Calu3 (cell line): ENCODE measurements at regions of chr5 and their contacts with region 1.

Region 1: DNA sequence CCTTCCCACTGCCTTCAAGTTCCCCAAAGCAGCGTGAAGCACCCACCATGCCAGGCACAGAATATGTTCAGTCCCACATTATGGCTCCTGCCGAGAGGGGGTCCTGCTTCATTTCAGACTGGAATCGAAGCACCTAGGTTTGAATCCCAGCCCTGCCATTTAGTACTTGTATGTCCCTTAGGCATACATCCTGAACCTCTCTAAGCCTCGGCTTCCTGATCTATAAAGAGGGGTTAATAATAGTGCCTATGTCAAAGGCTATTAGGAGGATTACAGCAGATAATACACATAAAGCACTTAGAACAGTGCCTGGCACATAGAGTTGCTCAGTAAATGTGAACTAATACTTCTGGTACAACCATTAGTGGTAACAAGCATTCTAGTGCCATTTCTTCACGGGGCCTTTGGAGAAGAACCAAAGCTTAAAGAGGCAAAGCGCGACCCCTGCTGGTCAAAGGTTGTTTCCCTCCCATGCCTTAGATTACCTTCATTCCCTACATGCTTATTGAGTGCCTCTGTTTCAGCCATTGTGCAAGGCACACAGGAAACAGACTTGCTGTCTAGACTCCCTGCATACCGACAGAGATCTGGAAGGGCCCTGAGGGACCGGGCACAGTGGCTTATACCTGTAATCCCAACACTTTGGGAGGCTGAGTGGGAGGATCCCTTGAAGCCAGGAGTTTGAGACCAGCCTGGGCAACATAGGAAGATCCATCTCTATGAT is 98.2 kb downstream of the PPARGC1B start:
- DNase-seq: peak; percentile 92
- H3K4me3 Mint-ChIP-seq: no peak overlapping the region
- H3K27ac Mint-ChIP-seq: peak overlapping the region; percentile 47
- H3K4me1 Mint-ChIP-seq: peaks cover 7% of the 10 kb centered on the region
- H3K27me3 Mint-ChIP-seq: no peaks in the 10 kb centered on the region
- CTCF ChIP-seq: peak; percentile 77

Region 2: DNA sequence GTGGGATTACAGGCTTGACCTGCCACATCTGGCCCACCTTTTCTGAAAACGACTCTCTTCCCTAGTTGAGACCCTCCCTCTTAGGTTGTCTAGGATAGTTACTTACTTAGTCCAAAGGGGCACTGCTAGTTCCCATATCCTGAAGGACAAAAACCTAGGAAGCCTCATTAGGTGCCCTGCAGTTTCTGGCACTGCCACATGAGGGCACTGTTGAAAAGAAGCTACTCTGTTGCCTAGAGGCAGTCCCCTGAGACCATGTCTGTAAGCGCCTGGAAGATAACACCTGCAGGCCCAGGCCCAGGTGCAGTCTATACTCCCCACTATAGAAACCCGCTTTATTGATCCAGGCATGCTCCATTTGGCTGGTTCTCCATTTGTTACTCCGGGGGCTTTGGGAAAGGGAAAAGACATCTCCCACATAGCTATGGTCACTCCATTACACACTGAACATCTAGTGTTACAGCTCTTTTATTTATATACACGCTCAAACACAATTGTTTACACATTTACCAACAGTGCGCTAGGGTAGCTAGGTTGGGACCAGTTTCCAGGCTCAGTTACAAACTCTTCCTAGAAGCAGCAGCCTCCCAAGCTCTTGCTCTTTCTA is 171.6 kb before region 1 on chr5:
- CTCF ChIA-PET with region 1: interaction called, 11 read pairs
- intact Hi-C with region 1: loop called (anchors 1 kb)
- DNase-seq: peak; percentile 71
- H3K4me3 Mint-ChIP-seq: no peak overlapping the region
- H3K27ac Mint-ChIP-seq: no peak overlapping the region
- H3K4me1 Mint-ChIP-seq: no peaks in the 10 kb centered on the region
- H3K27me3 Mint-ChIP-seq: peaks cover 39% of the 10 kb centered on the region
- CTCF ChIP-seq: peak; percentile 89

Region 3: DNA sequence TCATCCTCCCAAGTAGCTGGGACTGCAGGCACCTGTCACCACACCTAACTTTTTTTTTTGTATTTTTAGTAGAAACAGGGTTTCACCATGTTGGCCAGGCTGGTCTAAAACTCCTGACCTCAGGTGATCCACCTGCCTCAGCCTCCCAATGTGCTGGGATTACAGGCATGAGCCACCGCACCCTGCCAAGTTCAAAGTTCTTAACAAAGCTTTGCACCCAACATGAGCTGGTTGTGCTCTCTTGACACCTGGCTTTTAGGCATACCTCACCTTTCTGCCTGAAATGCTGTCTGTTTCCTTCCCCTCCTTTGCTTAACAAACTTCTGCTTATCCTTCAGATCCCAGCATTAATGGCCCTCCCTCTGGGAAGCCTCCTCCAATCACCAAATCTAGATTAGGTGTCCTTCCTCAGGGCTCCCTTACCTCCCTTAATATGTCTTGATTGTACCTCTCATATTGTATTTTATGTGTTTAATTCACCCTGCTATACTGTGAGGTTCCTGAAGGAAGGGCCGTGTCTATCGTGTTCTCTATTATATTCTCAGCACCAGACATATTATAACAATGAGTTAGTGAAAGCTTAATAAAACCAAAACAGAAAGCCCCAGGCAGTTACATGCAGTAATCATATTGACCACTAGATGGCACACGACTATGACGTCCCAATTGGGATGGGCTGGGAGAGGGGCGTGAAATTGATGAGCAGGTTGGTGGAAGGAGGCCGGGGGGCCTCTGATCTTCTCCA is 161.1 kb before region 1 on chr5:
- CTCF ChIA-PET with region 1: interaction called, 13 read pairs
- intact Hi-C with region 1: no loop called
- DNase-seq: peak; percentile 49
- H3K4me3 Mint-ChIP-seq: no peak overlapping the region
- H3K27ac Mint-ChIP-seq: no peak overlapping the region
- H3K4me1 Mint-ChIP-seq: peaks cover 8% of the 10 kb centered on the region
- H3K27me3 Mint-ChIP-seq: no peaks in the 10 kb centered on the region
- CTCF ChIP-seq: peak; percentile 84

Region 4: GRCh38 chr5:149680810-149681221 is 147.5 kb before region 1 on chr5:
- CTCF ChIA-PET with region 1: no interaction called
- intact Hi-C with region 1: no loop called
- DNase-seq: no peak
- H3K4me3 Mint-ChIP-seq: no peak overlapping the region
- H3K27ac Mint-ChIP-seq: no peak overlapping the region
- H3K4me1 Mint-ChIP-seq: peaks cover 8% of the 10 kb centered on the region
- H3K27me3 Mint-ChIP-seq: peaks cover 62% of the 10 kb centered on the region
- CTCF ChIP-seq: no peak

Region 5: DNA sequence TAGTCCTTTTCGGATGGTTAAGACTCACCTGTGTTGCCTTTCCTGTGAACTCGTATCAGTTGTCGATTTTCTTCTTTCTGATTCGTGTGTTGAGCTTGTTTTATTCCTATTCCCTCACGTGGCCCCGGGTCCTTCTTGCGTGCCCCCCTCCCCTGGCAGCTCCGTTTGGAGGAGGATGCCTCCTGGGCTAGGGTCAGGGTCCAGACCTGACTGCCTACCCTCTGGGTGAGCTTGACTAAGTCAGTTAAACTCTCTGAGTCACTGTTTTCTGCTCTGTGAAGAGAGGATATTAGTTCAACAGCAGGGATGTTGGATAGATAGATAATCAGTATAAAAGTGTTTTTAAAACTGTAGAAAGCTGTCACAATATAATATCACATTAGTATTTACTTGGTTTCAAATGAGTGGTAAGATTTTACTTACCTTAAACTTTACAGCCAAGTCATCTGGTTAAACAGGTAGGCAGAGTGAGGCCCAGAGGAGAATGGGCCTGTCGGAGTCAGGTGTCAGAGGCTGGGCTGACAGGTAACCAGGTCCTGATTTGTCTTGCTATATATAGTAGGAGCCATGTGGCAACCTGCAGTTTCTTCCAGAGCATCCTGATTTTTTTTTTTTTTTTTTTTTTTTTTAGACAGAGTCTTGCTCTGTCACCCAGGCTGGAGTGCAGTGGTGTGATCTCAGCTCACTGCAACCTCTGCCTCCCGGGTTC is 74.0 kb before region 1 on chr5:
- CTCF ChIA-PET with region 1: no interaction called
- intact Hi-C with region 1: no loop called
- DNase-seq: no peak
- H3K4me3 Mint-ChIP-seq: no peak overlapping the region
- H3K27ac Mint-ChIP-seq: no peak overlapping the region
- H3K4me1 Mint-ChIP-seq: peaks cover 33% of the 10 kb centered on the region
- H3K27me3 Mint-ChIP-seq: no peaks in the 10 kb centered on the region
- CTCF ChIP-seq: no peak